ENCODE measurements at regions of chr1 and their contacts with region 1.

Region 1: DNA sequence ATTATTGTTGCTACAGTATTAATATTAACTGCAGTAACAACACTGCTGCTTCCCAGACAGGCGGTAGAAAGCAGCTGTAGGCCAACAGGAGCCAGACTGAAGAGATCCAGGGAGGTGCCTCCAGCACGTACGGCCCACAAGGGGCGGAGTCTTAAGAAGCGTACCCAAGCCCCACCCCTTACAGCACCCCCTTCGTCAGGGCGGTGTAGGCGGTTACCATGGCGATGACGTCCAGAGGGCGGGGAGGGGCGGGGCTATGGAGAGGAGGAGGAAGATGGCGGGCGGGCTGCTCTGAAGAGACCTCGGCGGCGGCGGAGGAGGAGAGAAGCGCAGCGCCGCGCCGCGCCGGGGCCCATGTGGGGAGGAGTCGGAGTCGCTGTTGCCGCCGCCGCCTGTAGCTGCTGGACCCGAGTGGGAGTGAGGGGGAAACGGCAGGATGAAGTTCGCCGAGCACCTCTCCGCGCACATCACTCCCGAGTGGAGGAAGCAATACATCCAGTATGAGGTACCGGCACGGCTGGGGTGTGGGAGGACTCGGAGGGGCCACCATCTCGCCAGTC is at the start of gene XPR1:
- DNase-seq: peak; percentile 98
- ATAC-seq: peak; percentile 99
- total RNA-seq, gene XPR1: 35.8 TPM

Region 2: DNA sequence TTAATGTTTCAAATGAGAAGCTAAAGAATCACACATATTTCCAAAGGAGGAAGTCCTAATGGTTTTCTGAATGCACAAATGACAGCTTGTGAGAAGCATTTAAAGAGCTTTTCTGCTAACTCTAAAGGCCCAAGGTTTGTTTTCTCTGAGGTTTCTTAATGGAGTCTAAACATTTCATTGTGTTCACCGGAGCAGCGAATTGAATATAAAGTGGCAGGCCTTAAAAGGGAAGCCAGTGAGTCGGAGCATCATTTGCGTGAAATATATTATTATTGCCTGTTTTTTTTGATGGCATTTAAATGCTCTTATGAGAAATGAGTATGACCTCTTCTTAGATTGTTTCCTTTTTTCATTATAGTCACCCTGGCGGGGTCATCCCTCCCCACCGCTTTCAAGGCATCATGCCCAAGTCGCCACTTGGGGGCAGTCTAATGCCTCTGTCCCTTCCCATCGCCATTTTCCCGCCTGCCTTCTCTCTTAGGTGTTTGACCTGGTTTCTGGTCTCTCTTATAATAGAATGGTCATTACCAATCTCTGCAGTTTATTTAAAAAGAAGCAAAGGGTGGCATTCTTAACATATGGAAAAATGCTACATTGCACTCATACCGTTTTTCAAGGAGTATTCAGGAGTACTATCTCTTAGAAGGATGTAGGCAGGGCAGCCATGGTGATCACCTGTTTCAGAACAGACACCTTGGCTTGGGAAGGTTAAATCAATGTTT is 98.4 kb before region 1 on chr1:
- intact Hi-C with region 1: loop called (anchors 2 kb)
- DNase-seq: no peak
- ATAC-seq: peak; percentile 75

Region 3: DNA sequence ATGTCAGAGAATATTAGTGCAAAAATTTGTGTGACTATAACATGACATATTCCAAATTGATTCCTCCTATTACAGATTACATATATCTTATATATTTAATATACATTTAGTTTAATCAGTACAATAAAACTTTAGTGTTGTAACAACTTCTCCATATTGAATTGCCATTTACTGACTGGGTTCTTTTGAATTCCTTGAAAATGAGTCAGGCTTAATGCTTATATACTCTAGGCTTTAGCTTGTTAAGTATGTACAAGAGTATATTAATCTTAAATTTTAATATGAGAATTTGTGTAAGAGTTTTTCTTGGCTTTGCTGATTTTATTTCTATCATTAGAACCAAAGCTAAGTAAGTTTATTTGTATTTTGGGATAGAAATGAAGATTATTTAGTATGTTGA is 40.3 kb after region 1 on chr1:
- intact Hi-C with region 1: loop called (anchors 1 kb)
- DNase-seq: no peak
- ATAC-seq: no peak

Region 4: GRCh38 chr1:180851995-180852887 is 220.4 kb after region 1 on chr1:
- intact Hi-C with region 1: loop called (anchors 2 kb)
- DNase-seq: no peak
- ATAC-seq: no peak

Measured in Right ventricle myocardium inferior (tissue), 1 donor.